ENCODE measurements at regions of chr3 and their contacts with region 1.

Region 1: DNA sequence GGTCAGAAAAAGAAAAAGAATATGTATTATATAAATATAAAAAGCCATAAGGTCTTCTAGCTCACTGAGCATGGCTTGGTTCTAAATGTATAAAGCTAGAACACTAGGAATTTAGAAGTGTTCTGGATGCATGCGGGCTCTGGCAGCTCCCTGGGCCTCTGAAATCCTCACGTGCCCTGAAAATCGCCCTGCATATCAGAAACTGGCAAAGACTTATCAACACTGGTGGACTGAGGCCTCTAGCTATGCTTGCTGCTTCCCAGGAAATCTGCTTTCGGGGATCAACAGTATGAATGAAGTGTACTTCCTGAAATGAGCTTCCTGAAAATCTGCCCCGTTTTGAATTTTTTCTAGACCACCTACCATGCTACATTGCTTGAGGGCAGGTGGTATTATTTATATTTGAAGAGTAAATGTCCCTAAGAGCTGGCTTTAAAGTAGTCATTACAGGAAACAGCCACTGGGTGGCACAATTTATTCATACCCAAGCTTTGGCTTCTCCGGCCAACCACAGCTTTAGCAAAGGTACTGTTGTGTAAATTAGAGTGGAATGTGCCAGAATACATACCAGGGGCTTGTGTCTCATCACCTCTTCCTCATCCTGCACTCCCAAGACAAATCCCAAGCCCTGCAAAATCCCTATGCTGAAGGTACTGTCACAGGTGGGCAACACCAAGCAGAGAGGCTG is 17.7 kb downstream of the CRTAP start:
- DNase-seq: peak; percentile 68
- H3K4me3 ChIP-seq: no peak overlapping the region
- H3K27ac ChIP-seq: no peak overlapping the region
- H3K4me1 ChIP-seq: no peaks in the 10 kb centered on the region
- CTCF ChIP-seq: peak; percentile 93

Region 2: GRCh38 chr3:33152363-33153360 is 21.2 kb after region 1 on chr3:
- CTCF ChIA-PET with region 1: no interaction called
- POLR2A ChIA-PET with region 1: no interaction called
- intact Hi-C with region 1: no loop called
- DNase-seq: no peak
- H3K4me3 ChIP-seq: no peak overlapping the region
- H3K27ac ChIP-seq: no peak overlapping the region
- H3K4me1 ChIP-seq: peaks cover 5% of the 10 kb centered on the region
- CTCF ChIP-seq: no peak

Region 3: DNA sequence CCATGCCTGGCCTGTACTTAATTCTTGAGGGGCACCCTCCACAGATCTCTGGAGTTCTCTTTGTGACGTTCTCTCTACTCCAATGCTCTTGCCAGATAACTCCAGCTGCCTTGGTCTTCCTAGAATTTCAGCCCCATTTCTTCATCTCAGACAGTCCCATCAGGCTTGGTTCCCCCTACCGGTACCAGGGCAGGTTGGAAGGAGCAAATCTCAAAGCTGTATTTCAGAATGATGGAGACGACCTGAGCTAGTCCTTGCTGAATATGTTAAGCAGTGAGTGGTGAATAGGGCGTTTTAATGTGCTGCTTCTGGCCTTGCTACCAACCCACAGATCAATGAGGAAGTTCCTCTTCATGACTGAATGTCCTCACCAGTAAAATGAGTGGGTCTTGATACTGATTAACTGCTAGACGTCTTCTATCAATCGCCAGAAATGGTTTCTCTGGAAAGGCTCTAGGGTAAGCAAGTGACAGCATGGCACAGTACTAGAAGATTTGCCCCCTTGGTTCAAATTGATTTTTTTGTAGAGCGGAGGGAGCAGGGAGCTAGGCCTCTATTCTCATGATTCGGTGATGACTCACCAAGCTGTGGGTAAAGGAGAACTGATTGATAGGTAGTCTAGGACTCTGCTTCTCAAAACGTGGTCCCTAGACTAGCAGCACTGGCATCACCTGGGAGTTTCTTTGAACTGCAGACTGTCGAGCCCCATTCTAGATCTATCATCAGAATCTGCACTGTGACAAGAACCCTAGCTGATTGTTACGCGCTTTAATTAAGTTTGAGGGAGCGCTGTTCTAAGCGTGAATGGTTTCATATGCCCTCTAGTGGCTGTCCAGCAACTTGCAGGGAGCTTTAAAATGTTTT is 241.0 kb after region 1 on chr3:
- CTCF ChIA-PET with region 1: interaction called, 4 read pairs
- POLR2A ChIA-PET with region 1: no interaction called
- intact Hi-C with region 1: loop called (anchors 1 kb)
- DNase-seq: peak; percentile 60
- H3K4me3 ChIP-seq: no peak overlapping the region
- H3K27ac ChIP-seq: no peak overlapping the region
- H3K4me1 ChIP-seq: no peaks in the 10 kb centered on the region
- CTCF ChIP-seq: peak; percentile 97

Measured in OCI-LY7 (cell line).